ENCODE measurements at regions of chr7 and their contacts with region 1.

Region 1: GRCh38 chr7:158818325-158819213 is 10.7 kb downstream of the ESYT2 start:
- DNase-seq: peak; percentile 99 to 100
- H3K4me3 ChIP-seq: peak overlapping the region; percentile 48
- H3K27ac ChIP-seq: peak overlapping the region; percentile 95
- H3K4me1 ChIP-seq: peaks cover 81% of the 10 kb centered on the region
- H3K27me3 ChIP-seq: no peaks in the 10 kb centered on the region
- CTCF ChIP-seq: no peak

Region 2: GRCh38 chr7:157299613-157300368 is 1518.8 kb before region 1 on chr7:
- CTCF ChIA-PET with region 1: no interaction called
- POLR2A ChIA-PET with region 1: no interaction called
- intact Hi-C with region 1: loop called (anchors 5 kb)
- DNase-seq: peak; percentile 66 to 72
- H3K4me3 ChIP-seq: no peak overlapping the region
- H3K27ac ChIP-seq: no peak overlapping the region
- H3K4me1 ChIP-seq: peaks cover 34% of the 10 kb centered on the region
- H3K27me3 ChIP-seq: no peaks in the 10 kb centered on the region
- CTCF ChIP-seq: no peak

Region 3: DNA sequence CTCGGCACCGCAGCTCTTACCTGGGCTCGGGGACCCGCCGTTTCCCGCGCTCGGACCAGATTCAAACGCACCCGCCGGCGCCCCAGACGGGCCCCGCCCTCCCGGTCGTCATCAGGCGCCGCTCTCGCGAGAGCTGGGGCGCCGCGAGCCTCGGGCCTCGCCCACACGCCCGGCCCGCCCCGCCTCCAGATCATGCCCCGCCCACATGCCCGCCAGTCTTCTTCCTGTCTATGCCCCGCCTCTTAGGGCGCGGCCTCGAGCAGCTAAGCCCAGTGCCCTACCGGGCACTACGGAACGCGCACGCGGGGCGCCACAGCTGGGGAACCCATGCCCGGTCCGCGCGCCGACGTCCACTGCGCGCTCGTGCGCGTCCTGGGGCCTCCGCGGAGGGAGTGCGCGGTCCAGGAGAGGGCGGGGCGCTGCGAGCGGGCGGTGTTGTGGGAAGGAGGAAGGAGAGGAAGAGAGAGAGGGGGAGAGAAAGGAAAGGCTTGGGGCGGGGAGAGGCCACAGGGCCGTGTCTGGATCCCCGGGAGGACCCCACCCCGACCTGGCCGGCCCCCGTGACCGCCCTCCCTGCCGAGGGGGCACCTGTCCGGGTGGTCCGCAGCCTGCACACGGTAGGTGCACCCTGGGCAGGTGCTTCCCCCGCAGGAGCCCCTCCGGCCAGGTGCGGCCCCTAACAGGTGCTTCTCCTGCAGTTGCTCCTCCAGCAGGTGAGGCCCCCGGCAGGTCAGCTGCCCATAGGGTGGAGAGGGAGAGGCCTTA is 113.7 kb before region 1 on chr7 and contains the start of gene NCAPG2:
- CTCF ChIA-PET with region 1: no interaction called
- POLR2A ChIA-PET with region 1: interaction called, 4 read pairs
- intact Hi-C with region 1: loop called (anchors 5 kb)
- DNase-seq: peak; percentile 97 to 99
- H3K4me3 ChIP-seq: peak within 1 kb of the TSS; percentile 70
- H3K27ac ChIP-seq: peak within 1 kb of the TSS; percentile 50
- H3K4me1 ChIP-seq: peaks cover 33% of the 10 kb centered on the region
- H3K27me3 ChIP-seq: no peaks in the 10 kb centered on the region
- CTCF ChIP-seq: no peak; the same call in 1 of the 2 replicates
- total RNA-seq, gene NCAPG2: 99.5 and 124 TPM in 2 replicates

Region 4: DNA sequence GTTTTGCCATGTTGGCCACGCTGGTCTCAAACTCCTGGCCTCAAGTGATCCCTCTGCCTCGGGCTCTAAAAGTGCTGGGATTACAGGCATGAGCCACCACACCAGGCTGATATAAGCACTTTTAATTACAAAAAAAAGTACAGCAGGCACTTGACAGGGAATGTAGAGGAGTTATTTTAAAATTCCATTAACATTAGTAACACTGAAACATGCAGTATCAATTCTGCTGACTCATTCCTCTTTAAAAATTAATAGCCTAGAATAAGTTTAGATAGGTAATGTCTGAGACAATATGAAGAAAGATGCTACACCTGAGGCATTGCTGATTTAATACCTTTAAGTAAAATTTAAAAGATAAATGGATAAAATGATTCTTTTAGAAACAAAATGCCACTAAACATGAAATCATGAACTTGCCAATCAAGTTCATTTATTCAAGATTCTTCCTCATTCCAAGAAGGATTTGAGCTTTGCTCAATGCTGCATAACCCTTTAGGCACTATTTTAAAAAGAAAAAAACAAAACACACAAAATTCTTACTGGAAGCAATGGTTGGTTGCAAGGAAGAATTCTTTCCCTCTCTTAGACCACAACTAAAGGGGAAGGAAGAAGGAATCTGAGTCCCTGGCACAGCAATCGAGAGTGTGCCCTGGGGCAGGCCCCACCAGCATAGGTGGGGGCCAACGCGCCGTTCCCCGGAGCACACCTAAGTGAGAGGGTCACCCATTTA is 15.9 kb before region 1 on chr7:
- CTCF ChIA-PET with region 1: no interaction called
- POLR2A ChIA-PET with region 1: interaction called, 11 read pairs
- intact Hi-C with region 1: loop called (anchors 1 kb)
- DNase-seq: peak; percentile 78 to 99
- H3K4me3 ChIP-seq: peak overlapping the region; percentile 35
- H3K27ac ChIP-seq: peak overlapping the region; percentile 97
- H3K4me1 ChIP-seq: peaks cover 59% of the 10 kb centered on the region
- H3K27me3 ChIP-seq: no peaks in the 10 kb centered on the region
- CTCF ChIP-seq: no peak

Region 5: GRCh38 chr7:158829342-158830210 is 11.0 kb after region 1 on chr7 and contains the start of gene ESYT2:
- CTCF ChIA-PET with region 1: interaction called, 5 read pairs
- POLR2A ChIA-PET with region 1: no interaction called
- intact Hi-C with region 1: loop called (anchors 1 kb)
- DNase-seq: peak; percentile 90 to 99
- H3K4me3 ChIP-seq: peak within 1 kb of the TSS; percentile 84
- H3K27ac ChIP-seq: peak within 1 kb of the TSS; percentile 89
- H3K4me1 ChIP-seq: peaks cover 34% of the 10 kb centered on the region
- H3K27me3 ChIP-seq: no peaks in the 10 kb centered on the region
- CTCF ChIP-seq: peak; percentile 12; the same call in 1 of the 2 replicates
- total RNA-seq, gene ESYT2: 124 and 162 TPM in 2 replicates

Region 6: DNA sequence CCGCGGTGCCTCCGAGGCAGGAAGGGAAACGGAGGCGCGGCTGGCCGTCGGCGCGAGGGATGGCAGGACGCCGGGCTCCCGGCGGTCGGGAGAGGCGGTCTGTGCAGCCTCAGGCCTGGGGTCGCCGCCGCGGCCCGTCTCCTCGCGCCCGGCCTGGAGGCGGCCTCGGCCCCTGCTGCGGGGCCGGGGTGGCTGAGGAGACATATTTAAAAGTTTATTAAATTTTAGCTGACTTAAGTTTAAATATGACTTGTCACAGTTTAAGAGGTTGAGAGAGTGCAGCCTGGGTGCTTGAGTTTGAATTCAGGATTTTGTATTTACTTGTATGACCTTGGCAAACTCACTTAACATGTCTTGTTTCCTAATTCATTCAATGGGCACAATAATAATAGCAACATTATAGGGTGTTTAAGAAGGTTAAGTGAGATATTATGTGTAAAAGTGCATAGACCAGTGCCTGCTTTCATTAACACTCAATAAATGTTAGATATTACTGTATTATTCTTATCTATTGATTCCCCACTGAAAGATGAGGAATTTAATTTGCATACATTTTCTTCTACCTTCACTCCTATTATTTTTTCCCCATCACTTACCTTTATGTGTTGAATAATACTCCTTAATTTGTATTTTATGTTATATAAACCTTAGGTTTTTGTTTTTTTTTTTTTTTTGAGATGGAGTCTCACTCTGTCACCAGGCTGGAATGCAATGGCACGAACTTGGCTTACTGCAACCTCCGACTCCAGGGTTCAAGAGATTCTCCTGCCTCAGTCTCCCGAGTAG is 38.5 kb after region 1 on chr7:
- CTCF ChIA-PET with region 1: no interaction called
- POLR2A ChIA-PET with region 1: no interaction called
- intact Hi-C with region 1: loop called (anchors 1 kb)
- DNase-seq: no peak
- H3K4me3 ChIP-seq: peak overlapping the region; percentile 95
- H3K27ac ChIP-seq: no peak overlapping the region
- H3K4me1 ChIP-seq: peaks cover 40% of the 10 kb centered on the region
- H3K27me3 ChIP-seq: no peaks in the 10 kb centered on the region
- CTCF ChIP-seq: no peak

Region 7: DNA sequence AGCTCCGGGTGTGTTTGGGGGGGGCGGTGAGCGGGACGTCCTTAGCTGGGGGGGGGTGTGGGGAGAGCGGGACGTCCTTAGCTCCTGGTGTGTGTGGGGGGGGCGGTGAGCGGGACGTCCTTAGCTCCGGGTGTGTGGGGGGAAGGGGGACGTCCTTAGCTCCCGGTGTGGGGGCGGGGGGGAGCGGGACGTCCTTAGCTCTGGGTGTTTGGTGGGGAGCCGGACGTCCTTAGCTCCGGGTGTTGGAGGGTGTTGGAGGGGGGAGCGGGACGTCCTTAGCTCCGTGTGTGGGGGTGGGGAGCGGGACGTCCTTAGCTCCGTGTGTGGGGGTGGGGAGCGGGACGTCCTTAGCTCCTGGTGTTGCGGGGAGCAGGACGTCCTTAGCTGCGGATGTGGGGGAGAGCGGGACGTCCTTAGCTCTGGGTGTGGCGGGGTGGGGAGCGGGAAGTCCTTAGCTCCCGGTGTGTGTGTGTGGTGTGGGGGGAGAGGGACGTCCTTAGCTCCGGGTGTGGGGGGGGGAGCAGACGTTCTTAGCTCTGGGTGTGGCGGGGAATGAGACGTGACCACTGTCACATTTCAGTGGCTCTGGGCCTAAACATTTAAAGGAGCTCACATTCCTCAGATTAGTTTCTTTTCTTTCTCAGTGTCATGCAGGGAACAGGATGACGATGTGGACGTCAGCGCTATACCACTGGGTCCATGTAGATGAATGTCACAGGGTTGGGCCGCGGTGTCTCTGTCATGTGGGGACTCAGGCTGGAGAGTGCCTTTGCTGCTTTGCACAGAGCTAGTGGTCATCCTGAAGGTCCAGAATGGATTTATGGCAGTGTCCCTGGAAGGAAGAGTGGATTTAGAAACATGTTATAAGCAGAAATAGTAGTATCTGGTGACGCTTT is 45.3 kb after region 1 on chr7:
- CTCF ChIA-PET with region 1: no interaction called
- POLR2A ChIA-PET with region 1: interaction called, 42 read pairs
- intact Hi-C with region 1: no loop called
- DNase-seq: peak; percentile 68 to 71
- H3K4me3 ChIP-seq: peak overlapping the region; percentile 51; the same call in 1 of the 2 replicates
- H3K27ac ChIP-seq: peak overlapping the region; percentile 62
- H3K4me1 ChIP-seq: peaks cover 25% of the 10 kb centered on the region
- H3K27me3 ChIP-seq: no peaks in the 10 kb centered on the region
- CTCF ChIP-seq: no peak